ENCODE measurements at regions of chr2 and their contacts with region 1.

Region 1: DNA sequence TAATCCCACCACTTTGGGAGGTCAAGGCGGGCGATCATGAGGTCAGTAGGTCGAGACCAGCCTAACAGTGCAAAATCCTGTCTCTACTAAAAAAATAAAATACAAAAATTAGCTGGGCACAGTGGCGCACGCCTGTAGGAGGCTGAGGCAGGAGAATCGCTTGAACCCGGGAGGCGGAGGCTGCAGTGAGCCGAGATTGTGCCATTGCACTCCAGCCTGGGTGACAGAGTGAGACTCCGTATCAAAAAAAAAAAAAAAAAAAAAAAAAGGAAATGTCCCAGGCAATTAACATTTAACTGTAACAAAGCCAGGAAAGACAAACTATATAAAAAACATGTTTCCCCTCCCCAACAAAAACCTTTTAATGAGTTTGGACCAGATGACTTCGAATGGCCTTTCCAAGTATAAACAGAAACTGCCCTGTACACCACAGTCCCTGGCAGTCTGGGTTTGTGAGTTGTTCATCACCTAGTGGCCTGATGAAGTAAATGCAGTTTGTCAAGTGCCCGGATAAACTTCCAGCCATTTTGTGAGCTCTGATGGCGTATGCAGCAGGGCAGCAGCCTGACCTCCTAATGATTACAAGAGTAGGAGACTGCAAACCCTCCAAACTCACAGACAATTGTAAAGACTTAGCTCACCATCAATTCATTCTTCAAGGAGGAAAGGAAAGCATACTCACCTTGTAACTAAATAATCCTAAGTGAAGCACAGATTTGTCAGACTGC is 16.6 kb upstream of the PCBP1 start:
- DNase-seq: peak; percentile 25
- H3K4me3 ChIP-seq: peak overlapping the region in 1 of 4 donors; percentile 7
- H3K27ac ChIP-seq: peak overlapping the region; percentile 51 to 87 (median 76)
- H3K4me1 ChIP-seq: peaks cover 5 to 39% (median 19%) of the 10 kb centered on the region in 3 donors
- H3K27me3 ChIP-seq: no peaks in the 10 kb centered on the region
- CTCF ChIP-seq: peak; percentile 78 to 95 (median 92)
- POLR2A ChIP-seq: no peak

Region 2: DNA sequence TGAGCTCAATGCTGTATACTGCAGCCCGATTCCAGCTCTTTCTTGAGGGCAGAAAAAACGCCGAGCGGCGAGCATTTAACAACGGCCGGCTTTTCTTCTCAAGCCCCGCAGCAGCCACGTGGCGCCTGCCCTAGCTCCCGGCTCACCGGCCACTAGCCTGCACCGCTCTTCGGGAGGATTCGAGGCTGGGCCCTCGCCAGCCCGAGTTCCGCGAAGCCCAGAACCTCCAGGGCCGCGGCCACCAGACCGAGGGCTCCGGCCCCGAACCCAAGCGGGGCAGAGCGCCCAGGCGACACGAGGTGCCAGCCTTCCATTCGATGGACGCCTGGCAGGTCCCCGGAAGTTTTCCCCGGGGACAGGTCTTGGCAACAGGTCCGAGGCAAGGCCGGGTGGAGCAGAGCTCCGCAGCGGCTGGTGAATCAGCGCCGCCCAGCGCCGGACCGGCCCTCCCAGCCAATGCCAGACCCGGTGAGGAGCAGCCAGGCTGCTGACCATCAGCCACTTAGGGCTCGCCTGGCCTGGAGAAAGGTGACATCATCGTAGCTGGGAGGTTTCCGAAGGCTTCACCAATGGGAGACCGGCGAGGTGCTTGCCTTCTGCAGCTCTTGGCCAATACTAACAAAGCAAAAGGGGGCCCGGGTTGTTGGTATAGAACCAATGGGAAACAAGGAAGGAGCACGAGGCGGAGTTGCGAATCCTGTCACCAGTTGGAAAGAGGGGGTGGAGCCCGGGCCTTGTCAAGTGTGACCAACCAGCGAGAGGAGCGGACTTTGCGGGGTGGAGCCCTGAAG is 156.3 kb before region 1 on chr2:
- intact Hi-C with region 1: loop called (anchors 5 kb)
- DNase-seq: peak; percentile 100
- H3K4me3 ChIP-seq: peak overlapping the region; percentile 58 to 95 (median 88)
- H3K27ac ChIP-seq: peak overlapping the region; percentile 97 to 99 (median 99)
- H3K4me1 ChIP-seq: peaks cover 6 to 50% (median 13%) of the 10 kb centered on the region in 3 donors
- H3K27me3 ChIP-seq: no peaks in the 10 kb centered on the region
- CTCF ChIP-seq: peak in 1 of 6 experiments; percentile 6
- POLR2A ChIP-seq: peak in 3 of 4 donors; percentile 77 to 92 (median 91)